ENCODE measurements at regions of chr11 and their contacts with region 1.

Region 1: DNA sequence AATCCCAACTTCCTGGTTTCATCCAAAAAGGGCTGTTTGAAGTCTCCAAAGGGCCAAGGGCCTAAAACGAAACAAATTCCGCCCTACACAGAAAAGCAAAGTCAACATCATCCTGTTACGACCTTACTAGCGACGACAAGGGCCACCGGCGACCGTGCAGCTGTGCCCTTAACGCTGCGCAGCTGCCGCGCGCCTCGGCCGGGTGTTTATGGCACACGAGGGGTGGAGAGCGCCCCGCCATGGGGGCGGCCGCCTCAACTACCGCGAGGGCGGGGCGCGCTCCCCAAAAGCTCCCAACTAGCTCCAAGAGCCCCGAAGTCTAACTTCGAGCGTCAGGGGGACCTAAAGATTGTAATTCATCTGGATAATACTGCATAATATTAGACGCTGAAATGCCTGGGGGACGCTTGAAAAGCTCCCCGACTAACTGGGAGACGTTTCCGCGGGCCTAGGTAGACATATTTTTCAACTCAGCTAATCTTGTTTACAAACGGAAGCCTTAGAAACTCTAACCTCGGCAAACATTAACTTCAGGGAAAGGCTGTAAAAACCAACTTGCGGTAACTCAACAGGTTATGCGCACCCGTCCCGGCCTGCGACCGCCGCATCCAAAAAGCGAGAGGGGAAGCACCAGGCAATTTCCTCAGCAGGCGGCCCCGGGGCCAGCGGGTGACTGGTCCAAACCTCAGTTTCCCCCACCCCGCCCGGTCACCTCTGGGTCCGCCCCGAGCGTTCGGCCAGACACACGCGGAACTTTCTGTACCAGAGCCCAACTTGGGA is 694 bp downstream of the TMEM123 start:
- DNase-seq: no peak
- ATAC-seq: peak; percentile 75
- H3K4me3 ChIP-seq: peak overlapping the region; percentile 75
- H3K27ac ChIP-seq: peak overlapping the region; percentile 79
- H3K4me1 ChIP-seq: peaks cover 17% of the 10 kb centered on the region; the same call in 1 of the 2 replicates
- H3K27me3 ChIP-seq: no peaks in the 10 kb centered on the region
- CTCF ChIP-seq: peak; percentile 27 to 44 (median 35); a peak in 3 of 6 replicates
- EP300 ChIP-seq: no peak
- POLR2A ChIP-seq: peak; percentile 84
- RAD21 ChIP-seq: peak; percentile 20; the same call in 1 of the 2 replicates

Region 2: GRCh38 chr11:102430158-102430836 is 21.6 kb before region 1 on chr11:
- CTCF ChIA-PET with region 1: interaction called, 13 read pairs
- POLR2A ChIA-PET with region 1: interaction called, 9 read pairs
- RAD21 ChIA-PET with region 1: interaction called, 27 read pairs
- SMC1A ChIA-PET with region 1: interaction called, 25 read pairs
- in situ Hi-C with region 1: no loop called
- intact Hi-C with region 1: loop called (anchors 2 kb)
- DNase-seq: peak; percentile 99
- ATAC-seq: peak; percentile 90
- H3K4me3 ChIP-seq: peak overlapping the region; percentile 53
- H3K27ac ChIP-seq: peak overlapping the region; percentile 91
- H3K4me1 ChIP-seq: peaks cover 35% of the 10 kb centered on the region
- H3K27me3 ChIP-seq: no peaks in the 10 kb centered on the region
- CTCF ChIP-seq: no peak
- EP300 ChIP-seq: peak; percentile 76 to 82; a peak in 2 of 4 replicates
- POLR2A ChIP-seq: no peak
- RAD21 ChIP-seq: no peak; the same call in 1 of the 2 replicates

Measured in GM12878 (cell line).